Posterior vena cava (tissue), 2 donors: ENCODE measurements at regions of chr1 and their contacts with region 1.

Region 1: DNA sequence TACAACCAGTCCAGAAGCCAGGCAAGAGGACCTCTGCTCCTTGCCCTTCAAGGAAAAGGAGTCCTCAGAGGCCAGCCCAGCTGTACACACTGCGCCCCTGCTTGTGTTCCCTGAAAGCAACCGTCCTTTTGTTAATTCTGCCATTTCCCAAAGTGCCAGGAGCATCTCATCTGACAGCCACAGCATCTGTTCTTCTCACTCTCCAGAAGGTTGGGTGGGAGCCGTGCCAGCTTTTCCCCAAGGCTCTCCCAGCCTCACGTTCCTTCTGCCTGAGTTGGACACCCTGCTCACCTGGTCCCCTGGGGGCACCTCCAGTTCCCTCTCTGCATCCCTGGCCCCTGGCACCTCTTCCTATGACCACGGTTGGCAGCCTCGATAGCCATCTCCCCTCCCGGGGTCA is 10.5 kb upstream of the CNTN2 start:
- DNase-seq: no peak

Region 2: GRCh38 chr1:205048382-205048781 is 15.9 kb after region 1 on chr1:
- intact Hi-C with region 1: loop called in 1 of 2 experiments (anchors 1 kb)
- DNase-seq: no peak